Endothelial cell of umbilical vein (primary cell): ENCODE measurements at regions of chr19 and their contacts with region 1.

Region 1: GRCh38 chr19:53792721-53793433 is 31.2 kb downstream of the NLRP12 start:
- DNase-seq: peak; percentile 88
- H3K4me3 ChIP-seq: no peak overlapping the region
- H3K27ac ChIP-seq: no peak overlapping the region
- H3K4me1 ChIP-seq: no peaks in the 10 kb centered on the region
- H3K27me3 ChIP-seq: no peaks in the 10 kb centered on the region
- CTCF ChIP-seq: peak; percentile 99
- POLR2A ChIP-seq: no peak

Region 2: DNA sequence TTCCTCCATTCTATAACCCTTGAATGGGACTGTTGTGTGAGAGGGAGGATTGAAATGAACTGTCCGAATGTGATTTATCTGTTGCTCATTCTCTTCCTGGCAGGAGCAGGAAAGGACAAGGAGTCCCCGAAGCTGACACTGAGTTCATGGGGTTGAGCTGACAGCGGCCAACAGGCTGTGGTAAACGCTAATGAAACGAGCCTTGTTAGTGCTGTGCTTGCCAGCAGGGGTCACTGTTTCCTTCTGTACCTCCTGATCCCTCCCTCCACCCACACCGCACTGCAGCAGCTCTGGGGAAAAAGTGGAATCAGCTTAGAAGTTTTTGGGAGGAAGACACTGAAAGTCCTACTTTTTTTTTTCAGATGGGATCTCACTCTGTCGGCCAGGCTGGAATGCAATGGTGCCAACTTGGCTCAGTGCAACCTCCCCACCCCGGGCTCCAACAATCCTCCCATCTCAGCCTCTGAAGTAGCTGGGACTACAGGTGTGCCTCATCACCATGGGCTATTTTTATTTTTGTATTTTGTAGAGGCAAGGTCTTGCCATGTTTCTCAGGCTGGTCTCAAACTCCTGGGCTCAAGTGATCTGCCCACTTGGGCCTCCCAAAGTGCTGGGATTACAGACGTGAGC is 367.8 kb before region 1 on chr19:
- CTCF ChIA-PET with region 1: interaction called, 12 read pairs
- POLR2A ChIA-PET with region 1: no interaction called
- dilution Hi-C with region 1: no loop called
- intact Hi-C with region 1: no loop called
- DNase-seq: peak; percentile 58
- H3K4me3 ChIP-seq: no peak overlapping the region
- H3K27ac ChIP-seq: no peak overlapping the region
- H3K4me1 ChIP-seq: no peaks in the 10 kb centered on the region
- H3K27me3 ChIP-seq: no peaks in the 10 kb centered on the region
- CTCF ChIP-seq: peak; percentile 71 to 89
- POLR2A ChIP-seq: no peak

Region 3: GRCh38 chr19:53730390-53730789 is 62.5 kb before region 1 on chr19:
- CTCF ChIA-PET with region 1: no interaction called
- POLR2A ChIA-PET with region 1: no interaction called
- dilution Hi-C with region 1: no loop called
- intact Hi-C with region 1: no loop called
- DNase-seq: no peak
- H3K4me3 ChIP-seq: no peak overlapping the region
- H3K27ac ChIP-seq: no peak overlapping the region
- H3K4me1 ChIP-seq: no peaks in the 10 kb centered on the region
- H3K27me3 ChIP-seq: no peaks in the 10 kb centered on the region
- CTCF ChIP-seq: no peak
- POLR2A ChIP-seq: no peak

Region 4: DNA sequence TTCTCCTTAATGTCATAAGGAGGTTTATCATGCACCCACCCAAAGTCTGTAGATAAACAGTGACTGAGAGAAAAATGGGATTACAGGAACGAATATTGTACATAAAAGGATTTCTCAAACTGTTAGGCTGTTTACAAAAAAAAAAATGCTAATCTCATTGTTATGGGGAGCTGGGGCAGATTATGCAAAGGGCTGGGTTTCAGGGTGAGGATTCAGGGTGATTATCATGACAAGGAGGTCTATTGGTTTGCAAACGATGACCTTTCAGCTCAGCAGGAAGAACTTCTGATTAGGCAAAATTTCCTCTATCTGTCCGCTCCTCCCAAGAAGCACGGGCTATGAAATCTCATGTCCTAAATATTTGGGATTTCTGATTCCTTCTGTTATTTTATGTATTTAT is 10.2 kb before region 1 on chr19:
- CTCF ChIA-PET with region 1: interaction called, 10 read pairs
- POLR2A ChIA-PET with region 1: no interaction called
- dilution Hi-C with region 1: no loop called
- intact Hi-C with region 1: no loop called
- DNase-seq: no peak
- H3K4me3 ChIP-seq: no peak overlapping the region
- H3K27ac ChIP-seq: no peak overlapping the region
- H3K4me1 ChIP-seq: no peaks in the 10 kb centered on the region
- H3K27me3 ChIP-seq: no peaks in the 10 kb centered on the region
- CTCF ChIP-seq: no peak
- POLR2A ChIP-seq: no peak

Region 5: DNA sequence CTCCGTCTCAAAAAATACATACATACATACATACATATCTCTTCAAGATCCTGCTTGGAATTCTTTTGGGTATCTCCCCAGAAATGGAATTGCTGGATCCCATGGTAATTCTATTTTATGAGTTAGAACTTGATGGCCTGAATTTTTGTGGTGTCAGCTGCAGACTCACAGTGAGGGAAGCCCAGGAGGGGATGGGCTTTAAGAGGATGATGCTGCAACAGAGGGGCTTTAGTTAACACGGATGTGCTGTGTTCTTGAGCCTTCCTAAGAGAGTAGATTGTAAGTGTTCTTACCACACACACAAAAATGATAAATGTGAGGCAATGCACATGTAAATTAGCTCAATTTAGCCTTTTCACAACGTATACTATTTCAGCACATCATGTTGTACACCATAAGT is 230.3 kb after region 1 on chr19:
- CTCF ChIA-PET with region 1: interaction called, 216 read pairs
- POLR2A ChIA-PET with region 1: no interaction called
- dilution Hi-C with region 1: no loop called
- intact Hi-C with region 1: loop called (anchors 1 kb)
- DNase-seq: no peak
- H3K4me3 ChIP-seq: no peak overlapping the region
- H3K27ac ChIP-seq: peak overlapping the region; percentile 25
- H3K4me1 ChIP-seq: peaks cover 20% of the 10 kb centered on the region
- H3K27me3 ChIP-seq: no peaks in the 10 kb centered on the region
- CTCF ChIP-seq: no peak
- POLR2A ChIP-seq: no peak

Region 6: GRCh38 chr19:54041969-54042606 is 249.2 kb after region 1 on chr19:
- CTCF ChIA-PET with region 1: interaction called, 12 read pairs
- POLR2A ChIA-PET with region 1: no interaction called
- dilution Hi-C with region 1: no loop called
- intact Hi-C with region 1: no loop called
- DNase-seq: no peak
- H3K4me3 ChIP-seq: no peak overlapping the region
- H3K27ac ChIP-seq: no peak overlapping the region
- H3K4me1 ChIP-seq: peaks cover 7% of the 10 kb centered on the region
- H3K27me3 ChIP-seq: peaks cover 11 to 25% of the 10 kb centered on the region in 2 experiments
- CTCF ChIP-seq: no peak
- POLR2A ChIP-seq: no peak

Region 7: GRCh38 chr19:54231077-54231931 is 438.4 kb after region 1 on chr19:
- CTCF ChIA-PET with region 1: interaction called, 4 read pairs
- POLR2A ChIA-PET with region 1: no interaction called
- dilution Hi-C with region 1: no loop called
- intact Hi-C with region 1: loop called (anchors 1 kb)
- DNase-seq: peak; percentile 74
- H3K4me3 ChIP-seq: no peak overlapping the region
- H3K27ac ChIP-seq: no peak overlapping the region
- H3K4me1 ChIP-seq: no peaks in the 10 kb centered on the region
- H3K27me3 ChIP-seq: peaks cover 10 to 17% of the 10 kb centered on the region in 2 experiments
- CTCF ChIP-seq: peak; percentile 96 to 100
- POLR2A ChIP-seq: no peak

Region 8: GRCh38 chr19:54390942-54391577 is 598.2 kb after region 1 on chr19:
- CTCF ChIA-PET with region 1: interaction called, 5 read pairs
- POLR2A ChIA-PET with region 1: no interaction called
- dilution Hi-C with region 1: no loop called
- intact Hi-C with region 1: loop called (anchors 1 kb)
- DNase-seq: peak; percentile 57
- H3K4me3 ChIP-seq: no peak overlapping the region
- H3K27ac ChIP-seq: no peak overlapping the region
- H3K4me1 ChIP-seq: peaks cover 19% of the 10 kb centered on the region
- H3K27me3 ChIP-seq: peaks cover 1 to 4% of the 10 kb centered on the region in 2 experiments
- CTCF ChIP-seq: peak; percentile 58 to 69
- POLR2A ChIP-seq: no peak